Heart left ventricle (tissue), 16 donors: ENCODE measurements at regions of chr16 and their contacts with region 1.

Region 1: DNA sequence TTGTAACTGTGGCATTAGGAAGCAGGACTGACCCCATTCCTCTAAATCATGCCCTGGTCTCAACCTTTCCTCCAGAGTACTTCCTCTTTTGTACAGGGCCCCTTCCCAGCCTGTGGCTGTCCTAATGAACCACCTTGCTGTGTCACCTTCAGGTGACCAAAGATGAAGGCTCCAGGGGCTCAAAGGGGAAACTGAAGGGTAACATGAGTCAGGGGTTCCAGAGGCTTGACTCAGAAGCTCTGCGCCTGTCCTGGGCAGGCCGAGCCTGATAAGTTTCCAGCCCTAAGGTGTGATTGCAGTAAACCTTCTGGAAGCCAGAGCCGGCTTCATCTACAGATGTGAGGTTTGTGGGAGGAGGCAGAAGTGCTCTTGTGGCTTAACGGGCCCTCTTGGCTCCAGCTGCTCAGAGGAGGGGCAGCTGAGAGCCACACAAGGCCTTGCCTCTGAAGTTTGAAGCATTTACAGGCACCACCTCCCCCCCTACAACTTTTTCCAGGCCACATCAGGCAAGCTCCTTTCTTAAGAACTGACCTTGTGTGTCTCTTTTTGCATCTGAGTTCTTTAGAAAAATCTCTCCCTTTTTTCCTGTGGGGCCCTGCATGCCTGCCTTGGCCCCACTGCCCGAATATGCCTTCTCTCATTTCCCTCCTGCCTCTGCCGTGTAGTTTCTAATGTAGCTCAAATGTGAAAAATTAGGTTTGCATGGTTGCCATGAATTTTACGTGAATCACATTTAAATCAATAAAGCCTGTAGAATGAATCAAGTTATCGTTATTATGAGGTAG is 149.9 kb downstream of the CLEC16A start:
- DNase-seq: peak in 1 of 5 donors; percentile 15
- ATAC-seq: no peak
- H3K4me3 ChIP-seq: no peak overlapping the region
- H3K27ac ChIP-seq: peak overlapping the region in 2 of 12 donors; percentile 8 to 77
- H3K4me1 ChIP-seq: peaks cover 0 to 26% (median 0%) of the 10 kb centered on the region in 12 donors
- H3K27me3 ChIP-seq: no peaks in the 10 kb centered on the region
- CTCF ChIP-seq: no peak
- POLR2A ChIP-seq: no peak

Region 2: GRCh38 chr16:10979717-10980601 is 114.3 kb before region 1 on chr16:
- intact Hi-C with region 1: loop called in 1 of 10 experiments (anchors 5 kb)
- DNase-seq: peak in 2 of 5 donors; percentile 33
- ATAC-seq: peak in 3 of 4 donors; percentile 55 to 66 (median 63)
- H3K4me3 ChIP-seq: peak overlapping the region in 1 of 12 donors; percentile 22
- H3K27ac ChIP-seq: peak overlapping the region in 7 of 12 donors; percentile 25 to 83 (median 52)
- H3K4me1 ChIP-seq: peaks cover 0 to 28% (median 9%) of the 10 kb centered on the region in 12 donors
- H3K27me3 ChIP-seq: no peaks in the 10 kb centered on the region
- CTCF ChIP-seq: no peak
- POLR2A ChIP-seq: no peak